CD8-positive, alpha-beta T cell (primary cell): ENCODE measurements at regions of chr7 and their contacts with region 1.

Region 1: GRCh38 chr7:33109005-33109757 is at the start of gene RP9:
- DNase-seq: peak; percentile 56 to 89 (median 72)
- ATAC-seq: peak; percentile 88
- H3K4me3 ChIP-seq: peak within 1 kb of the TSS; percentile 58 to 74
- H3K4me3 Mint-ChIP-seq: peak within 1 kb of the TSS; percentile 87
- H3K27ac ChIP-seq: peak within 1 kb of the TSS; percentile 22 to 55
- H3K27ac Mint-ChIP-seq: peak within 1 kb of the TSS; percentile 86
- H3K4me1 ChIP-seq: peaks cover 24% of the 10 kb centered on the region
- H3K4me1 Mint-ChIP-seq: peaks cover 39% of the 10 kb centered on the region
- H3K27me3 ChIP-seq: no peaks in the 10 kb centered on the region
- H3K27me3 Mint-ChIP-seq: peaks cover 10% of the 10 kb centered on the region
- CTCF ChIP-seq: peak; percentile 36
- total RNA-seq, gene RP9: 20.2 to 21.8 TPM

Region 2: GRCh38 chr7:32495298-32496176 is 613.6 kb before region 1 on chr7 and contains the start of gene AVL9:
- CTCF ChIA-PET with region 1: interaction called, 7 read pairs
- POLR2A ChIA-PET with region 1: no interaction called
- intact Hi-C with region 1: loop called (anchors 1 kb)
- DNase-seq: peak; percentile 98 to 99 (median 99)
- ATAC-seq: peak; percentile 89
- H3K4me3 ChIP-seq: peak within 1 kb of the TSS; percentile 66 to 87
- H3K4me3 Mint-ChIP-seq: peak within 1 kb of the TSS; percentile 97
- H3K27ac ChIP-seq: peak within 1 kb of the TSS; percentile 95 to 99
- H3K27ac Mint-ChIP-seq: peak within 1 kb of the TSS; percentile 96
- H3K4me1 ChIP-seq: peaks cover 31% of the 10 kb centered on the region
- H3K4me1 Mint-ChIP-seq: peaks cover 42% of the 10 kb centered on the region
- H3K27me3 ChIP-seq: no peaks in the 10 kb centered on the region
- H3K27me3 Mint-ChIP-seq: no peaks in the 10 kb centered on the region
- CTCF ChIP-seq: no peak
- total RNA-seq, gene AVL9: 22.4 to 24.7 TPM

Region 3: DNA sequence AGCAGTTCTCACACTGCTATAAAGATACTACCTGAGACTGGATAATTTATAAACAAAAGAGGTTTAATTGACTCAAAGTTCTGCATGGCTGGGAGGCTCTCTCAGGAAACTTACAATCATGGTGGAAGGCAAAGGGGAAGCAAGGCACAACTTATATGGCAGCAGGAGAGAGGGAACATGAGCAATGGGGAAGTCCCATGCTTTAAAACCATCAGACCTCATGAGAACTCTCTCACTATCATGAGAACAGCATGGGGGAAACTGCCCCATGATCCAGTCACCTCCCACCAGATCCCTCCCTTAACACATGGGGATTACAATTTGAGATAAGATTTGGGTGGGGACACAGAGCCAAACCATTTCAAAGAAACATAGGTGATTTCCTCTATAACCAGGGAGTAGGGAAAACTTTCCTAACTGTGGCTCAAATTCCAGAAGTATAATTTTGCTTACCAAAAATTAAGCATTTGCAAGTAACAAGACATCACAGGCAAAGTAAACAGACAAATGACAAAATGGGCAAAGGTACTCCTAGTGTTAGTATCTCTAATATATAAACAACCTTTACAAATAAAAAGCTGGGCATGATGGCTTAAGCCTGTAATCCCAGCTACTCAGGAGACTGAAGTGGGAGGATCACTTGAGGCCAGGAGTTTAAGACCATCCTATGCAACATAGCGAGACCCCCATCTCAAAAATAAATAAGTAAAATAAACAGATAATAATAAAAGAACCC is 305.6 kb before region 1 on chr7:
- CTCF ChIA-PET with region 1: interaction called, 20 read pairs
- POLR2A ChIA-PET with region 1: no interaction called
- intact Hi-C with region 1: loop called in 1 of 2 experiments (anchors 1 kb)
- DNase-seq: no peak
- ATAC-seq: no peak
- H3K4me3 ChIP-seq: no peak overlapping the region
- H3K4me3 Mint-ChIP-seq: no peak overlapping the region
- H3K27ac ChIP-seq: no peak overlapping the region
- H3K27ac Mint-ChIP-seq: no peak overlapping the region
- H3K4me1 ChIP-seq: no peaks in the 10 kb centered on the region
- H3K4me1 Mint-ChIP-seq: no peaks in the 10 kb centered on the region
- H3K27me3 ChIP-seq: no peaks in the 10 kb centered on the region
- H3K27me3 Mint-ChIP-seq: peaks cover 2% of the 10 kb centered on the region
- CTCF ChIP-seq: no peak

Region 4: GRCh38 chr7:32942786-32943653 is 166.2 kb before region 1 on chr7:
- CTCF ChIA-PET with region 1: interaction called, 16 read pairs
- POLR2A ChIA-PET with region 1: no interaction called
- intact Hi-C with region 1: loop called (anchors 1 to 10 kb)
- DNase-seq: peak; percentile 25 to 81 (median 67)
- ATAC-seq: peak; percentile 86
- H3K4me3 ChIP-seq: peak overlapping the region; percentile 55 to 66
- H3K4me3 Mint-ChIP-seq: peak overlapping the region; percentile 78
- H3K27ac ChIP-seq: peak overlapping the region in 1 of 2 experiments; percentile 30
- H3K27ac Mint-ChIP-seq: no peak overlapping the region
- H3K4me1 ChIP-seq: peaks cover 16% of the 10 kb centered on the region
- H3K4me1 Mint-ChIP-seq: peaks cover 8% of the 10 kb centered on the region
- H3K27me3 ChIP-seq: no peaks in the 10 kb centered on the region
- H3K27me3 Mint-ChIP-seq: peaks cover 10% of the 10 kb centered on the region
- CTCF ChIP-seq: peak; percentile 74

Region 5: DNA sequence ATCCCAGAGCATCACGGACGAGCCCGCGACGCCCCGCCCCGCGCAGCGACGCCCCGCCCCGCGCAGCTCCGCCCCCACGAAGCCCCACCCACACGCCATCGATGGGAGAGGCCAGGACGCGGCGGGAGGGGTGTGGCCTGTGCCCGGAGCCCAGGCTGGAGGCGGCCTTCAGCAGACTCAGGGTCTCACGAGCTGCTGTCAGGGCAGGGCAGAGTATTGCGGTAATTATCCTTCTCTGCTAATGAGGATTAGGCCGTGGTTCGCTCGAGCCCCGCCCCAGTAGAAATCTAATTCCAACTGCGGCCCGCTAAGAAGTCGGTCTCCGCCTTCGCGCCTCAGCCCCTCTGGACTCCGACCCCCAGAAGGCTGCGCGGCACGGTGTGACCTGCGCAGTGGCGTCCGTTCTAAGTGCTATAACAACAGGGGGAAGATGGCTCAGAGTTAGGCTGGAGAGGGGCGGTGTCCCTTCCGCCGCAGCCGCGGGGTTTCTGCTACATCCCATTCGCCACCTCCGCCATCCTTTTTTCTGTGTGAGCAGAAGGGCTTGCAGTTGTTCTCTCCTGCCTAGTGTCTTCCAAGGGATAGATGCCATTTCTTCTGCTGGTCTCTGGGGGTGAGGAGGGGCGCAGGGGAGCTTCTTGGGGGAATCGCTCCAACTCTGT is 46.3 kb before region 1 on chr7:
- CTCF ChIA-PET with region 1: interaction called, 44 read pairs
- POLR2A ChIA-PET with region 1: interaction called, 13 read pairs
- intact Hi-C with region 1: loop called (anchors 1 kb)
- DNase-seq: peak; percentile 88 to 97 (median 91)
- ATAC-seq: peak; percentile 92
- H3K4me3 ChIP-seq: peak overlapping the region; percentile 75 to 97
- H3K4me3 Mint-ChIP-seq: peak overlapping the region; percentile 91
- H3K27ac ChIP-seq: peak overlapping the region; percentile 79 to 82
- H3K27ac Mint-ChIP-seq: peak overlapping the region; percentile 94
- H3K4me1 ChIP-seq: peaks cover 32% of the 10 kb centered on the region
- H3K4me1 Mint-ChIP-seq: peaks cover 42% of the 10 kb centered on the region
- H3K27me3 ChIP-seq: no peaks in the 10 kb centered on the region
- H3K27me3 Mint-ChIP-seq: no peaks in the 10 kb centered on the region
- CTCF ChIP-seq: no peak

Region 6: GRCh38 chr7:33177876-33178275 is 68.7 kb after region 1 on chr7:
- CTCF ChIA-PET with region 1: no interaction called
- POLR2A ChIA-PET with region 1: no interaction called
- intact Hi-C with region 1: loop called in 1 of 2 experiments (anchors 10 kb)
- DNase-seq: no peak
- ATAC-seq: no peak
- H3K4me3 ChIP-seq: no peak overlapping the region
- H3K4me3 Mint-ChIP-seq: no peak overlapping the region
- H3K27ac ChIP-seq: no peak overlapping the region
- H3K27ac Mint-ChIP-seq: no peak overlapping the region
- H3K4me1 ChIP-seq: no peaks in the 10 kb centered on the region
- H3K4me1 Mint-ChIP-seq: no peaks in the 10 kb centered on the region
- H3K27me3 ChIP-seq: no peaks in the 10 kb centered on the region
- H3K27me3 Mint-ChIP-seq: no peaks in the 10 kb centered on the region
- CTCF ChIP-seq: no peak

Region 7: DNA sequence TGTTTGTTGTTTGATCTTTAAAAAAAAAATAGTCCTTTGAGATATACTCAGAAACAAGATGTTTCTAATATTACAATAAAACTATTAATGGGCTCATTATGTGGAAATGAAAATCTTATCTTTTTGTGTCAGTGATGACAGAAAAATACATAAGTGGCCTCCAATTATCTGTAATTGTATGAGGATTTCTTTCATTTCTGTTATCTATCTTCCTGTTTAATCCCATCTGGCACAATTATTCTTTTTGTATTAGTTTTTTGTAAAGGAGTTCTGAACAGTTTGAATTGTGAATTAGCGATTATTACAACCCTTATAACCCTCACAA is 291.0 kb after region 1 on chr7:
- CTCF ChIA-PET with region 1: no interaction called
- POLR2A ChIA-PET with region 1: no interaction called
- intact Hi-C with region 1: no loop called
- DNase-seq: no peak
- ATAC-seq: no peak
- H3K4me3 ChIP-seq: no peak overlapping the region
- H3K4me3 Mint-ChIP-seq: no peak overlapping the region
- H3K27ac ChIP-seq: no peak overlapping the region
- H3K27ac Mint-ChIP-seq: no peak overlapping the region
- H3K4me1 ChIP-seq: no peaks in the 10 kb centered on the region
- H3K4me1 Mint-ChIP-seq: no peaks in the 10 kb centered on the region
- H3K27me3 ChIP-seq: no peaks in the 10 kb centered on the region
- H3K27me3 Mint-ChIP-seq: no peaks in the 10 kb centered on the region
- CTCF ChIP-seq: no peak